GM10248 (cell line): ENCODE measurements at regions of chr11 and their contacts with region 1.

Region 1: DNA sequence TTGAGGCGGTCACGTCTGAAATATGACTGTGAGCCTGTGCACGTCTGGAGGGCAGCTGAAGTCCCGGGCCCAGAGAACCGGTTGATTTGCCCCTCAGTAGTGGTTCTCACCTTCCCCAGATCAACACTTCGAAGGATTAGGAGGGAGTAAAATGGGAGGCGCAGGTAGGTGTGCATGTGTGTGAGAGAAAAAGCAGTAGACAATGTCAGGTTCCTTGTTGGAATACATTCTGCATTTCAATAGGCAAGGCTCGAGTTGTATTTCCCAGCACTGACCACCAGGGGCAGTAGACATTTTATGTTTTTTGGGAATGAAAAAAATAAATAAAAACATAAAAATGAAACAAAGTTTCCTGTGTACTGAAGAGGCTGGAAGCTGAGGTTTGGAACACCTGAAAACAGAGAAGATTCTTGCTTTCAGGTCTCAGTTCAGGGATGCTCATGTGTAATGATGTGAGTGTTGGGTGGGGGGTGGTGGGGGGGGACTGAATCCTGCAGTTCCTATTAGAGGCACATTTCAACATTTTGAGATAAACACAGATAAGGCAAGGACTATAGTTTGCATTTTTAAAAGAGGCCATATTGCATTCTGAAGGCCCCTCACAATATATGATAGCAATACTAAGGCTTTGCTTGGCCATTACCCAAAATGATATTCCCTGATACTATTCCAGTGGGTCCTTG is 333.9 kb downstream of the CADM1 start:
- DNase-seq: peak; percentile 29
- CTCF ChIP-seq: peak; percentile 69

Region 2: GRCh38 chr11:114785820-114786219 is 384.5 kb before region 1 on chr11:
- CTCF ChIA-PET with region 1: no interaction called
- POLR2A ChIA-PET with region 1: no interaction called
- DNase-seq: no peak
- CTCF ChIP-seq: no peak

Region 3: DNA sequence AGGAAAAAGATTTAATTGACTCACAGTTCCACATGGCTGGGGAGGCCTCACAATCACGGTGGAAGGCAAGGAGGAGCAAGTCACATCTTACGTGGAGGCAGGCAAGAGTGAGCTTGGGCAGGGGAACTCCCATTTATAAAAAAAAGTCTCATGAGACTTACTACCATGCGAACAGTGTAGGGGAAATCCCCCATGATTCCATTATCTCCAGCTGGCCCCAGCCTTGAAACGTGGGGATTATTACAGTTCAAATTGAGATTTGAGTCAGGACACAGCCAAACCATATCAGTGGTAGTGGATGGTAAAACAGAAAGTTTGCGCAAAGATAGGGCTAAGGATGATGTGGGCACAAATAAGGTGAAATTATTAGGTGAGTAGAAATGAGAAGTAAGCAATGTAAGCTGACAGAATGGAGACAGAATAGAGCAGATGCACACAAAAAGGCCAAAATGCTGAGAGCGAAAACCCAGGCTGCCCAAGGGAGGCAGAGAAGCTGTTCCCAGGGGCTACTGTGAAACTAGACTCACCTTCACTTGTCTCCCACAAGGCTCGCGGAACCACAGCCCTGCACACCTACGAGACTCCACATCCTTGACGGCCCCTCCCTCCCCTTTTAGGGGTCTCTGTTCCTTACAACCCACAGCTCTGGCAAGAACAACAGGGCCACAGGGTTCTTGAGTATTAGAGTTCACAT is 43.6 kb before region 1 on chr11:
- CTCF ChIA-PET with region 1: no interaction called
- POLR2A ChIA-PET with region 1: no interaction called
- DNase-seq: peak; percentile 57
- CTCF ChIP-seq: no peak

Region 4: GRCh38 chr11:115188188-115188897 is 18.1 kb after region 1 on chr11:
- CTCF ChIA-PET with region 1: interaction called, 38 read pairs
- POLR2A ChIA-PET with region 1: no interaction called
- DNase-seq: no peak
- CTCF ChIP-seq: no peak

Region 5: GRCh38 chr11:115267871-115268270 is 97.6 kb after region 1 on chr11:
- CTCF ChIA-PET with region 1: no interaction called
- POLR2A ChIA-PET with region 1: no interaction called
- DNase-seq: no peak
- CTCF ChIP-seq: no peak